ENCODE measurements at regions of chr20 and their contacts with region 1.

Region 1: GRCh38 chr20:34522969-34523871 is 7.0 kb downstream of the DYNLRB1 start:
- DNase-seq: peak in 4 of 6 donors; percentile 19 to 69 (median 39)
- ATAC-seq: peak; percentile 24 to 57 (median 52)
- H3K4me3 ChIP-seq: no peak overlapping the region
- H3K27ac ChIP-seq: peak overlapping the region in 1 of 4 donors; percentile 8
- H3K4me1 ChIP-seq: peaks cover 0 to 22% (median 6%) of the 10 kb centered on the region in 3 donors
- H3K27me3 ChIP-seq: no peaks in the 10 kb centered on the region
- CTCF ChIP-seq: peak in 3 of 4 donors; percentile 6 to 21 (median 20)

Region 2: GRCh38 chr20:33925867-33926266 is 597.4 kb before region 1 on chr20:
- intact Hi-C with region 1: no loop called
- DNase-seq: no peak
- ATAC-seq: no peak
- H3K4me3 ChIP-seq: no peak overlapping the region
- H3K27ac ChIP-seq: no peak overlapping the region
- H3K4me1 ChIP-seq: no peaks in the 10 kb centered on the region
- H3K27me3 ChIP-seq: no peaks in the 10 kb centered on the region
- CTCF ChIP-seq: no peak

Region 3: GRCh38 chr20:34268851-34269636 is 254.2 kb before region 1 on chr20:
- intact Hi-C with region 1: no loop called
- DNase-seq: peak in 4 of 6 donors; percentile 27 to 66 (median 41)
- ATAC-seq: peak; percentile 55 to 89 (median 77)
- H3K4me3 ChIP-seq: peak overlapping the region in 2 of 4 donors; percentile 27 to 38
- H3K27ac ChIP-seq: no peak overlapping the region
- H3K4me1 ChIP-seq: no peaks in the 10 kb centered on the region
- H3K27me3 ChIP-seq: no peaks in the 10 kb centered on the region
- CTCF ChIP-seq: no peak

Region 4: GRCh38 chr20:34312544-34313217 is 210.5 kb before region 1 on chr20:
- intact Hi-C with region 1: loop called in 1 of 3 experiments (anchors 10 kb)
- DNase-seq: peak; percentile 80 to 92 (median 87)
- ATAC-seq: peak; percentile 94 to 98 (median 96)
- H3K4me3 ChIP-seq: peak overlapping the region in 1 of 4 donors; percentile 29
- H3K27ac ChIP-seq: no peak overlapping the region
- H3K4me1 ChIP-seq: peaks cover 9 to 21% (median 14%) of the 10 kb centered on the region in 3 donors
- H3K27me3 ChIP-seq: no peaks in the 10 kb centered on the region
- CTCF ChIP-seq: peak; percentile 93 to 99 (median 98)

Region 5: DNA sequence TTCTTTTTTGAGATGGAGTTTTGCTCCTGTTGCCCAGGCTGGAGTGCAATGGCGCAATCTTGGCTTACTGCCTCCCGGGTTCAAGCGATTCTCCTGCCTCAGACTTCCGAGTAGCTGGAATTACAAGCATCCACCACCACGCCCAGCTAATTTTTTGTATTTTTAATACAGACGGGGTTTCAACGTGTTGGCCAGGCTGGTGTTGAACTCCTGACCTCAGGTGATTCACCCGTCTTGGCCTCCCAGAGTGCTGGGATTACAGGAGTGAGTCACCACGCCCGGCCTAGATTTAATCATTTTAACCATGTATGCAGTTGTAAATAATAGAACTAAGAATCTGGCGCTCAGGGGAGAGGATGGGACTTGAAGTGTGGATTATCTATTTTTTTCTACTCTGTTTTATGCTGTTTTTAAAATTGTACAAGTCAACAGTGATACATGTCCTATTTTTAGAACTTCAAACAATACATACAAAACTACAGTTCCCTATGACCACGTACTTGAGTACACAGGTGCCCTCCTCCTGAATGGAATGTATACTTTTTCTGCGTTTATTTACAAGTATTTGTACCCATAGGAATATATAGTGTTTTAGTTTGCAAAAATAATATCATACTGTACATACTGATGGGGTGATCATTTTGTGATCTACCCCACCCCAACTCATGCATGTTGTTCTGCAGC is 132.3 kb before region 1 on chr20:
- intact Hi-C with region 1: no loop called
- DNase-seq: peak in 3 of 6 donors; percentile 13 to 46 (median 21)
- ATAC-seq: peak; percentile 51 to 81 (median 66)
- H3K4me3 ChIP-seq: no peak overlapping the region
- H3K27ac ChIP-seq: no peak overlapping the region
- H3K4me1 ChIP-seq: peaks cover 12 to 20% (median 17%) of the 10 kb centered on the region in 3 donors
- H3K27me3 ChIP-seq: no peaks in the 10 kb centered on the region
- CTCF ChIP-seq: no peak

Measured in pancreas (tissue), 10 donors.